MCF 10A (cell line): ENCODE measurements at regions of chr1 and their contacts with region 1.

Region 1: GRCh38 chr1:152034646-152035405 is 2.0 kb downstream of the S100A11 start:
- DNase-seq: peak; percentile 89
- H3K4me3 Mint-ChIP-seq: peak overlapping the region; percentile 84
- H3K27ac Mint-ChIP-seq: peak overlapping the region; percentile 86
- H3K4me1 Mint-ChIP-seq: peaks cover 28% of the 10 kb centered on the region
- H3K27me3 Mint-ChIP-seq: no peaks in the 10 kb centered on the region
- CTCF ChIP-seq: peak; percentile 99

Region 2: GRCh38 chr1:151839457-151840405 is 195.1 kb before region 1 on chr1 and contains the start of gene C2CD4D:
- CTCF ChIA-PET with region 1: no interaction called
- POLR2A ChIA-PET with region 1: no interaction called
- intact Hi-C with region 1: no loop called
- DNase-seq: peak; percentile 84
- H3K4me3 Mint-ChIP-seq: peak within 1 kb of the TSS; percentile 85
- H3K27ac Mint-ChIP-seq: peak within 1 kb of the TSS; percentile 91
- H3K4me1 Mint-ChIP-seq: peaks cover 41% of the 10 kb centered on the region
- H3K27me3 Mint-ChIP-seq: no peaks in the 10 kb centered on the region
- CTCF ChIP-seq: no peak
- total RNA-seq, gene C2CD4D: not detected in 2 replicates

Region 3: DNA sequence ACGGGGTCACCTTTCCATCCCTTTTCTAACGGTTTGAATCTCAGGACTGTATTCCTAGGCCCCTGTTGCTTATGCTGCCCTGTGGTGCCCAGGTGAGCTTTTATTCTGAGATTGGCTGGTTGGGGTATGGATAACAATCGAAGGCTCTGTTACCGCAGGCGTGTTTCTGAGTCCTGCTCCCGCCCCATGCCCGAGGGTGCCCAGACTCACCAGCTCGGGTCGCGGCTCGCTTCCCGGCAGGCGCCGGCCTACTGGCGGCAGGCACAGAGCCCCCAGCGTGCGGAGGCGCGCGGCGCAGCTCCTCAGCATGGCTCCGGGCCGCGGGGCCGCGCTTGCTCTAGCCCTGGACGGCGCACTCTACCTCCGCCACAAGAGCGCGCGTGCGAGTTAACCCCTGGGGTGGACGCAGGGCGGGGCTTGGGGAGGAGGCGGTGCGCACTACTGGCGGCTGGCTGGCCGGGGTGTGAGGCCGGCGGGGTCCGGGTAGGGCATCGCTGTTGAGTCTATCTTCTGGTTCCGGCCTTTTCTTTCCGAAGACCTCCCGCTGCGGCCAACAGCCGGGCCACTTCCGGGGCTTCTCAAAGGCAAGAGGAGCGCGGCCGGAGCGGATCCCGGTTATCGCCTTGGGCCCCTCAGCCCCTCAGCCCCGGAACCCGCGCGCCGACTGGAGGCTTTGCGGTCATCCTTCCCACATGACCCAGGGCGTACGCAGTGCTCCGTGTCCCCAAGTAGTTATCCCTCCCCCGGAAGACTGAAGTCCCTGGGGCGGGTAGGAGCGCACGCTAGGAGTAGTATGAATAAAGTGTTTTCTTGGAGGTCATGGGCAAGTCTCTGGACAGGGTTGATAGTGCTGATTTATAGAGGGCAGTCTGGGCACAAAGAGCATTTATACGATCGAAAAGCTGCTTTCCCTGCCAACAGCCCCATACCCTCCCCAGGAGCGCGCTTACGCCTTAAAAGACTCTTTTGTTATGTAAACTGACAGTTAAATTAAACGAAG is 125.4 kb before region 1 on chr1 and contains the start of gene THEM4:
- CTCF ChIA-PET with region 1: interaction called, 6 read pairs
- POLR2A ChIA-PET with region 1: interaction called, 64 read pairs
- intact Hi-C with region 1: no loop called
- DNase-seq: peak; percentile 99
- H3K4me3 Mint-ChIP-seq: peak within 1 kb of the TSS; percentile 99
- H3K27ac Mint-ChIP-seq: peak within 1 kb of the TSS; percentile 99
- H3K4me1 Mint-ChIP-seq: peaks cover 17% of the 10 kb centered on the region
- H3K27me3 Mint-ChIP-seq: no peaks in the 10 kb centered on the region
- CTCF ChIP-seq: peak; percentile 25
- total RNA-seq, gene THEM4: 27.5 and 29.1 TPM in 2 replicates

Region 4: GRCh38 chr1:151945725-151946364 is 89.0 kb before region 1 on chr1:
- CTCF ChIA-PET with region 1: interaction called, 14 read pairs
- POLR2A ChIA-PET with region 1: interaction called, 28 read pairs
- intact Hi-C with region 1: no loop called
- DNase-seq: peak; percentile 100
- H3K4me3 Mint-ChIP-seq: peak overlapping the region; percentile 16
- H3K27ac Mint-ChIP-seq: peak overlapping the region; percentile 99
- H3K4me1 Mint-ChIP-seq: peaks cover 33% of the 10 kb centered on the region
- H3K27me3 Mint-ChIP-seq: no peaks in the 10 kb centered on the region
- CTCF ChIP-seq: no peak

Region 5: GRCh38 chr1:151984313-151984956 is 50.4 kb before region 1 on chr1:
- CTCF ChIA-PET with region 1: interaction called, 13 read pairs
- POLR2A ChIA-PET with region 1: interaction called, 218 read pairs
- intact Hi-C with region 1: no loop called
- DNase-seq: no peak
- H3K4me3 Mint-ChIP-seq: no peak overlapping the region
- H3K27ac Mint-ChIP-seq: peak overlapping the region; percentile 51
- H3K4me1 Mint-ChIP-seq: peaks cover 72% of the 10 kb centered on the region
- H3K27me3 Mint-ChIP-seq: no peaks in the 10 kb centered on the region
- CTCF ChIP-seq: no peak

Region 6: DNA sequence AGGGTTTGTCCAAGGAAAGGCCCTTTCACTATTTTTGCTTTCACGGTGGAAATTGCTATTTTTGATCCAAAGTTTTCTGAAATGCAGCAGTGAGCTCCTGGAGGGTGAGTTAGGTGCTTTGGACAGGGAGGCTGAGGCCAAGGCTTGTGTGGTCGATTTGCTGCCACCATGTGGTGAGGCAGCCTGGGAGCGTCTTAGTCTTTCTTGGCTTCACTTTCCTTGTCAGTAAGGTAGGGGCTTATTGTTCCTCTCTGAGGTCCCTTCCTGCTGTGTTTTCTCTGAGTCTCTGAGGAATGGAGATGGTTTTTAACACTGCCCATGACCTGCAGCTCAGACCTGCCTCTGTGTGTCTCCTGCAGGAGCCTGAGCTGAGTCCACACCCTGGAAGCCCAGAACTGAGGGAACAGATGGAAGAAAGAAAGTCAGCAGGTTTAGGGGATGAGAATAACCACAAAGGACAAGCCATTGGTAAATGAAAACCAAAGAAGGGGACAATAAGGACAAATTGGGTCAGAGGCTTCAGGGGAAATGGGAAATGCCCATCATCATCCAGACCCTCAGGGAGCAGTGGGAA is 21.1 kb before region 1 on chr1:
- CTCF ChIA-PET with region 1: interaction called, 31 read pairs
- POLR2A ChIA-PET with region 1: interaction called, 43 read pairs
- intact Hi-C with region 1: loop called (anchors 2 kb)
- DNase-seq: peak; percentile 76
- H3K4me3 Mint-ChIP-seq: no peak overlapping the region
- H3K27ac Mint-ChIP-seq: no peak overlapping the region
- H3K4me1 Mint-ChIP-seq: peaks cover 12% of the 10 kb centered on the region
- H3K27me3 Mint-ChIP-seq: no peaks in the 10 kb centered on the region
- CTCF ChIP-seq: peak; percentile 75

Region 7: DNA sequence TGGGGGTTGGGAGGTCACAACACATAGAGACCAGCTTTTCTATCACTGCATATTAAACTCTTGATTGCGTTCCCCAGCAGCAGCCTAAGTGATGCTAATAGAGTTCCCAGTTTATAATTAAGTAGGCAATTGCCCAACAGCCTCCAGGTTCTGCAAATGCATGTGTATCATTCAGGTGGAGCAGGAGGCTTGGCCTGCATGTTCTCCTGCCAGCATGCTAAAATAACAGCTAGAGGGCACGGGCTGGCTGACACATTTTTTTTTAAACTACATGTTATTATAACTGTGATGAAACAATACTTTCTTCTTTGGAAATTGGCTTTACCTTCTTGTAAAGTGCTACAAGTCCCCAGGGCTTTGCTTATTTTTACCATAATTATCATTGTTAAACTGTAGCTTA is 70.0 kb after region 1 on chr1:
- CTCF ChIA-PET with region 1: interaction called, 3 read pairs
- POLR2A ChIA-PET with region 1: interaction called, 23 read pairs
- intact Hi-C with region 1: no loop called
- DNase-seq: peak; percentile 54
- H3K4me3 Mint-ChIP-seq: no peak overlapping the region
- H3K27ac Mint-ChIP-seq: no peak overlapping the region
- H3K4me1 Mint-ChIP-seq: peaks cover 5% of the 10 kb centered on the region
- H3K27me3 Mint-ChIP-seq: peaks cover 13% of the 10 kb centered on the region
- CTCF ChIP-seq: no peak

Region 8: DNA sequence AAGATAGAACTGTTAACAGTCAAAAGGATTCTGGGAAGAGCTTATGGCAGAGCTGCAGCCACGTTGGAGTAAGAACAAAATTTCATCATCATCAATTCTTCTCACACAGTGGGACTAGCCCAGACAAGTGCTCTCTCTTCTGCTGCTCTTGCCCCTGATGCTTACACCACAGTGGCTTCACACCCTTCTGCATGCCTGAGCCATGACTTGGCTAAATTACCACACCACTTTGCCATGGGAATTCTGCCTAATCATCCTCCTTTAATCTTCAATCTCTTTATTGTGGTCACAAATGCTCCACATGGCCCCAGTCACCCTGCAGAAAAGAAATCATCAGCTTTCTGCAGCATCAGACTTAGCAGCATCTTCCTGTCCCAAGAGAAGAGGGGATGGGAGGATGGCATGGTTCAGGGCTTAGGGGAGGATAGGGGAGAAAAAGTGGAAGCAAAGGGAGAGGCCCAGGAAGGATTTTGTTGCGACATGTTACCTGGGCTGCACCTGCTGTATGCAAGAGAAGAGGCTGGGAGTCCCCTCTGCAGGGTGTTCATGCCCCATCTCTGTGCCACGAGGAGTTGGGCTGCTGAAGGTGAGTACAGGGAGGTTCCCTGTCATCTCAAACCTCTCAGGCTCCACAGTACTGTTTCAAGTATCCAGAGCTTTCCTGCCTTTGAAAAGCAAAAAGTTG is 133.2 kb after region 1 on chr1:
- CTCF ChIA-PET with region 1: no interaction called
- POLR2A ChIA-PET with region 1: interaction called, 83 read pairs
- intact Hi-C with region 1: no loop called
- DNase-seq: peak; percentile 100
- H3K4me3 Mint-ChIP-seq: peak overlapping the region; percentile 49
- H3K27ac Mint-ChIP-seq: peak overlapping the region; percentile 99
- H3K4me1 Mint-ChIP-seq: peaks cover 70% of the 10 kb centered on the region
- H3K27me3 Mint-ChIP-seq: no peaks in the 10 kb centered on the region
- CTCF ChIP-seq: no peak